Activated T-helper 1 cell treated with anti-CD3 and anti-CD28 coated beads, Interleukin-12 subunit alpha, Interleukin-12 subunit beta, Interleukin-2, Interleukin-4 antibody, amounts not matched to agents 30 ng/mL and 10 ng/mL and 1 ng/mL, durations not matched to agents 14 hours and 24 hours and 36 hours (primary cell): ENCODE measurements at regions of chr3 and their contacts with region 1.

Region 1: GRCh38 chr3:141279077-141279967 is 47.7 kb downstream of the PXYLP1 start:
- DNase-seq: no peak
- H3K4me3 Mint-ChIP-seq: peak overlapping the region; percentile 9
- H3K27ac Mint-ChIP-seq: no peak overlapping the region
- H3K4me1 Mint-ChIP-seq: peaks cover 21% of the 10 kb centered on the region
- H3K27me3 Mint-ChIP-seq: no peaks in the 10 kb centered on the region

Region 2: DNA sequence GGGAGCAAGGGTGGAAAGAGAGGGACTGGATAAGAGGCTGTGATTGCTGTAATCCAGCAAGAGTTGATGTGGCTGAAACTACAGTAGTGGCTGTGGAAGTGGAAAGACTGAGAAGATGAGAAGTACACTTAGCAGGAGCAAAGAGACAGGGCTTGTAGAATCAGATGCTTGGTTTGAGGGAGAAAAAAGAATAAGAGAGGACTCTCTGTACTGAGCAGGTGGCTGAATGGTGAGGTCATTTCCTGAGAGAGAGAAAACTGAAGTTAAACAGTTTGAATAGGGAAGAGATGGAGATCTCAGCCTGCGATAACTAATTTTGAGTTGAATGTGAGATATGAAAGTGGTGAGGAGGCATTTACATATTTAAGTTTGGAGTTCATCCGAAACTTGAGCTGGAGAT is 433.4 kb before region 1 on chr3:
- intact Hi-C with region 1: no loop called
- DNase-seq: no peak
- H3K4me3 Mint-ChIP-seq: no peak overlapping the region
- H3K27ac Mint-ChIP-seq: no peak overlapping the region
- H3K4me1 Mint-ChIP-seq: peaks cover 16% of the 10 kb centered on the region
- H3K27me3 Mint-ChIP-seq: peaks cover 2% of the 10 kb centered on the region

Region 3: GRCh38 chr3:141255846-141256261 is 23.5 kb before region 1 on chr3:
- intact Hi-C with region 1: loop called (anchors 1 kb)
- DNase-seq: peak; percentile 31
- H3K4me3 Mint-ChIP-seq: no peak overlapping the region
- H3K27ac Mint-ChIP-seq: peak overlapping the region; percentile 59
- H3K4me1 Mint-ChIP-seq: peaks cover 56% of the 10 kb centered on the region
- H3K27me3 Mint-ChIP-seq: no peaks in the 10 kb centered on the region

Region 4: DNA sequence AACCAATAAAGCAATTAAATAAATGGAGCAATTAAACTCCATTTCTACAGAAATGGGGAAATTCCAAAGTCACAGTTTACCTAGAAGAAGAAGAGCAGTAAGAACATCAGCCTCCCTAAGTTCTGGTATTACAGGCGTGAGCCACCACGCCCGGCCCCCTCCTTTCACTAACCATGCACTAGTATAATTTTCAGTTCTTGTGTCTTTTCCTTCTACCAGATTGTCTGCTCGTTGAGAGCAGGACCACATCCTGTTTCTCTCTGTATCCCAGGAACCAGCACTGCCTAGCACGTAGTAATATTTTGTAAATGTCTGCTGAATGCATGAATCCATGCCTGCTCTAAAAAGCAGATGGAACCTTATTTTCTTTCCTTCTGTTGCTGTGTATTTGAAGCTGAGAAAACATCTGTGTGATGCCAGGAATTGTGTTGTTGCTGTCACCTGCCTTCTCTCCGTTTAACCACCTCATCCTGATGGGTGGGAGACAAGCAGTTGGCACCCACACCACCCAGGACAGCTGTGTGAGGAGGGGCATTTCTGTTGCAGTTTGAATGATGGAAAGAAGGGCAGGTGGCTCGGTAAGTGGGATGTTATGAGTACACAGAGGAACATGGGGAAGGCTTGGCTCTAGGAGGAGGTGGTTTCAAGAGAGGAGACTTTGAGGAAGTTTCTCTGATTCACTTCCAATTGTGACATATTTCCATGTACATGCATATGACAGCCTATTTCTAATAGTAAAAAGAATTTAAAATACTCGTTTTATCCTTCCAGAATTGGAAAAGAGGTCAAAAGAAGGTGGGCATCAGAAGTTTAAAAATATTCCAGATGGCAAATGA is 17.6 kb before region 1 on chr3:
- intact Hi-C with region 1: loop called (anchors 1 kb)
- DNase-seq: no peak
- H3K4me3 Mint-ChIP-seq: peak overlapping the region; percentile 30
- H3K27ac Mint-ChIP-seq: peak overlapping the region; percentile 59
- H3K4me1 Mint-ChIP-seq: peaks cover 81% of the 10 kb centered on the region
- H3K27me3 Mint-ChIP-seq: no peaks in the 10 kb centered on the region